Spleen (tissue), 13 donors: ENCODE measurements at regions of chr11 and their contacts with region 1.

Region 1: GRCh38 chr11:126192361-126192760 is 19.1 kb downstream of the RPUSD4 start:
- DNase-seq: no peak
- H3K4me3 ChIP-seq: no peak overlapping the region
- H3K27ac ChIP-seq: no peak overlapping the region
- H3K4me1 ChIP-seq: peaks cover 0 to 12% (median 2%) of the 10 kb centered on the region in 6 donors
- H3K27me3 ChIP-seq: no peaks in the 10 kb centered on the region
- CTCF ChIP-seq: no peak
- POLR2A ChIP-seq: no peak

Region 2: GRCh38 chr11:125923012-125923579 is 269.3 kb before region 1 on chr11:
- intact Hi-C with region 1: loop called (anchors 2 kb)
- DNase-seq: no peak
- H3K4me3 ChIP-seq: no peak overlapping the region
- H3K27ac ChIP-seq: no peak overlapping the region
- H3K4me1 ChIP-seq: peaks cover 0 to 4% (median 0%) of the 10 kb centered on the region in 6 donors
- H3K27me3 ChIP-seq: peaks cover 0 to 47% (median 0%) of the 10 kb centered on the region in 7 donors
- CTCF ChIP-seq: peak in 10 of 11 experiments; percentile 23 to 79 (median 62)
- POLR2A ChIP-seq: no peak

Region 3: GRCh38 chr11:126079621-126080124 is 112.7 kb before region 1 on chr11:
- intact Hi-C with region 1: no loop called
- DNase-seq: no peak
- H3K4me3 ChIP-seq: no peak overlapping the region
- H3K27ac ChIP-seq: no peak overlapping the region
- H3K4me1 ChIP-seq: peaks cover 0 to 3% (median 0%) of the 10 kb centered on the region in 6 donors
- H3K27me3 ChIP-seq: peaks cover 0 to 21% (median 0%) of the 10 kb centered on the region in 7 donors
- CTCF ChIP-seq: no peak
- POLR2A ChIP-seq: no peak